Activated CD4-positive, alpha-beta memory T cell treated with anti-CD3 and anti-CD28 coated beads, Interleukin-2, amount 10 ng/mL, durations not matched to agents 7 days and 5 days (primary cell): ENCODE measurements at regions of chr12 and their contacts with region 1.

Region 1: GRCh38 chr12:132837693-132838409 is 9.2 kb upstream of the GOLGA3 start:
- DNase-seq: no peak
- H3K4me3 Mint-ChIP-seq: no peak overlapping the region
- H3K27ac Mint-ChIP-seq: no peak overlapping the region
- H3K4me1 Mint-ChIP-seq: peaks cover 37% of the 10 kb centered on the region
- H3K27me3 Mint-ChIP-seq: no peaks in the 10 kb centered on the region

Region 2: GRCh38 chr12:132748319-132748718 is 89.5 kb before region 1 on chr12:
- CTCF ChIA-PET with region 1: no interaction called
- POLR2A ChIA-PET with region 1: no interaction called
- DNase-seq: no peak
- H3K4me3 Mint-ChIP-seq: no peak overlapping the region
- H3K27ac Mint-ChIP-seq: no peak overlapping the region
- H3K4me1 Mint-ChIP-seq: peaks cover 6% of the 10 kb centered on the region
- H3K27me3 Mint-ChIP-seq: no peaks in the 10 kb centered on the region

Region 3: DNA sequence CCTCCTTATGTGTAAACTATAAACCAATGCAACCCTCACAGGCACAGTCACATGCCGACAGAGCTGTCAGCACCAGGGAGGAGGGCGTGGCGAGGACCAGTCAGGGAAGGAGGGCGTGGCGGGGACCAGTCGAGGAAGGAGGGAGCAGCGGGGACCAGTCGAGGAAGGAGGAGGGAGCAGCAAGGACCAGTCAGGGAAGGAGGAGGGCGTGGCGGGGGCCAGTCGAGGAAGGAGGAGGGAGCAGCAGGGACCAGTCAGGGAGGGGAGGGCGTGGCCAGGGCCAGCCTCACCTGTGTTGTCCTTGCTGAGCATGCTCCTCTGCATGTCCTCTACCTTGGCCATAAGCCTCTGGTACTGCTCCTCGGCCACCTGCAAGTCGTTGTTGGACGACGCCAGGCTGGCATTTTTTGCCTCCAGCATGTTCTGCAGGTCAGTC is 33.4 kb before region 1 on chr12:
- CTCF ChIA-PET with region 1: no interaction called
- POLR2A ChIA-PET with region 1: no interaction called
- DNase-seq: no peak
- H3K4me3 Mint-ChIP-seq: no peak overlapping the region
- H3K27ac Mint-ChIP-seq: no peak overlapping the region
- H3K4me1 Mint-ChIP-seq: peaks cover 5% of the 10 kb centered on the region
- H3K27me3 Mint-ChIP-seq: no peaks in the 10 kb centered on the region

Region 4: DNA sequence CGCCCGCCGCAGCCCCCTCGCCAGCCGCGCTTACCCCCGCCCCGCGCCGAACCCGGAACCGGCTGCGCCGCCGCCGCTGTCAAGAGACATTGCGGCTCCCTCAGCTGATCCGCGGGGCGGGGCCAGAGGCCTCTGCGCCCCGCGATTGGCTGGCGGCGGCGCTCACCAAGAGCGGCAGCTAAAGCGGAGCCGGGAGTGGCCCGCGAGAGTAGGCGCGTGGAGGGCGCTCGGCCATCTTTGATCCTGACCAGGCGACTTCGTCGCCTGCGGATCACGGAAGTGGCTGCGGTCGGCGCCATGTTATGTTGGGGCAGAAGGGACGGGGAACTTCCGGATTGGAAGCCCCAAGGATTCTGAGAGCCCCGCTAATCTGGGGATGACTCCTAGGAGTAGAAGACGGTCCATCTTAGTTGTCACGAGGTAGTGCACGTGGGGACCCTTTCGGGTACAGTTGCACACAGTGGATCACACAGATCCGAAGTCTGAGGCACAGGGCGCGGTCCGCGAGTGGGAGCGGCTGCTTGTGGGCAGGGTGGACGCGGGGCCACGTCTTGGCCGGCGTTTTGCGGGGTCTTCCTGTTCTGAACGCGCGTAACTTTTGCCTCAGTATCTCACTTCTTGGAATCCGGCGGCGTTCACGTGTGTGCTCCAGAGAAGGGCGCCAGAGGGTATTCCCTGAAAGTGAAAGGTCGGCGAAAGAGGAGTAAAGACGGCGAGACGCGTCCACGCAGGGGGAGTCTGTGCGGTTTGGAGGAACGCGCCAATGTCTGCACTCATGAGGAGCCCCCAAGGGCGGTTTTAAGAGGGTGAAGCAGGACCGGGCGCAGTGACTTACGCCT is 49.9 kb after region 1 on chr12 and contains the start of gene CHFR:
- CTCF ChIA-PET with region 1: no interaction called
- POLR2A ChIA-PET with region 1: interaction called, 15 read pairs
- DNase-seq: peak; percentile 97
- H3K4me3 Mint-ChIP-seq: peak within 1 kb of the TSS; percentile 97
- H3K27ac Mint-ChIP-seq: peak within 1 kb of the TSS; percentile 100
- H3K4me1 Mint-ChIP-seq: peaks cover 20% of the 10 kb centered on the region
- H3K27me3 Mint-ChIP-seq: peaks cover 3% of the 10 kb centered on the region
- total RNA-seq, gene CHFR: 78.7 to 78.8 TPM